ENCODE measurements at regions of chr1 and their contacts with region 1.

Region 1: GRCh38 chr1:30111431-30111830 is 612.0 kb downstream of the MATN1 start:
- DNase-seq: peak; percentile 2
- H3K4me3 Mint-ChIP-seq: no peak overlapping the region
- H3K27ac Mint-ChIP-seq: no peak overlapping the region
- H3K4me1 Mint-ChIP-seq: no peaks in the 10 kb centered on the region
- H3K27me3 Mint-ChIP-seq: peaks cover 21% of the 10 kb centered on the region

Region 2: GRCh38 chr1:29379443-29380073 is 731.9 kb before region 1 on chr1:
- intact Hi-C with region 1: loop called (anchors 1 kb)
- DNase-seq: peak; percentile 3
- H3K4me3 Mint-ChIP-seq: no peak overlapping the region
- H3K27ac Mint-ChIP-seq: no peak overlapping the region
- H3K4me1 Mint-ChIP-seq: no peaks in the 10 kb centered on the region
- H3K27me3 Mint-ChIP-seq: peaks cover 14% of the 10 kb centered on the region